ENCODE measurements at regions of chr12 and their contacts with region 1.

Region 1: GRCh38 chr12:77847060-77847541 is 16.4 kb downstream of the NAV3 start:
- DNase-seq: peak; percentile 39
- ATAC-seq: no peak; the same call in 1 of the 2 replicates
- H3K4me3 ChIP-seq: no peak overlapping the region
- H3K27ac ChIP-seq: no peak overlapping the region; the same call in 1 of the 2 replicates
- H3K4me1 ChIP-seq: peaks cover 32% of the 10 kb centered on the region
- H3K27me3 ChIP-seq: peaks cover 8% of the 10 kb centered on the region; the same call in 1 of the 2 replicates
- CTCF ChIP-seq: no peak

Region 2: GRCh38 chr12:77724367-77724957 is 122.6 kb before region 1 on chr12:
- CTCF ChIA-PET with region 1: no interaction called
- POLR2A ChIA-PET with region 1: no interaction called
- intact Hi-C with region 1: loop called (anchors 10 kb)
- DNase-seq: peak; percentile 60
- ATAC-seq: peak; percentile 62; the same call in 1 of the 2 replicates
- H3K4me3 ChIP-seq: no peak overlapping the region
- H3K27ac ChIP-seq: no peak overlapping the region
- H3K4me1 ChIP-seq: no peaks in the 10 kb centered on the region
- H3K27me3 ChIP-seq: no peaks in the 10 kb centered on the region
- CTCF ChIP-seq: peak; percentile 84

Region 3: GRCh38 chr12:77796775-77797174 is 50.3 kb before region 1 on chr12:
- CTCF ChIA-PET with region 1: no interaction called
- POLR2A ChIA-PET with region 1: no interaction called
- intact Hi-C with region 1: loop called (anchors 1 kb)
- DNase-seq: peak; percentile 70
- ATAC-seq: peak; percentile 90
- H3K4me3 ChIP-seq: no peak overlapping the region
- H3K27ac ChIP-seq: no peak overlapping the region
- H3K4me1 ChIP-seq: peaks cover 8% of the 10 kb centered on the region
- H3K27me3 ChIP-seq: no peaks in the 10 kb centered on the region
- CTCF ChIP-seq: no peak

Region 4: GRCh38 chr12:77861317-77861716 is 14.2 kb after region 1 on chr12:
- CTCF ChIA-PET with region 1: no interaction called
- POLR2A ChIA-PET with region 1: no interaction called
- intact Hi-C with region 1: no loop called
- DNase-seq: no peak
- ATAC-seq: no peak
- H3K4me3 ChIP-seq: no peak overlapping the region
- H3K27ac ChIP-seq: no peak overlapping the region
- H3K4me1 ChIP-seq: no peaks in the 10 kb centered on the region
- H3K27me3 ChIP-seq: peaks cover 15% of the 10 kb centered on the region
- CTCF ChIP-seq: no peak

Region 5: DNA sequence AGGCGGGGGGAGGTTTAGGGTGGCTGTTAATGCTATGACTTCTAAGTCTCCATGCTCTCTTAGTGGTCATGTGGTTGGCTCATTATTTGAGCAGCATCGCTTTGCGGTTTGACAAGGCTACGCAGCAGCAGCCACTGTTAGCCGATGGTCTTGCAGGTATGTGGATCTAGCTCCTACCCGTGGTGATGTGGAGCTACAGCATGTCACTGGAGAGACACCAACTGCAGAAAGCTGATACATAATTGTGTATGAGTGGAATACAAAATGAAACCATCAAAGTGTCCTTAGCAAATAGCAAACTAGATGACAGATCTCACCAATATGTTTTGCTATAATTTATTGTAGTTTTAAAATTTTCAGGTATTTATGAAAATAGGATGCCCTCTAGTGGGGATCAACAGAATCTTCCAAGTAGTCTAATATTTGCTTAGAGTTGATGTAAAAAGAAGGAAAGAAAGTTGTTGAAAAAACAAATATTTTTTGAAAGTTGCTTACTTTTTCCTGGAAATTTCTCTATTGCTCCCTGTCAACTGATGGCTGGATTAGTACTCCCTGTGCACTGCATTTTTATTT is 78.5 kb after region 1 on chr12:
- CTCF ChIA-PET with region 1: no interaction called
- POLR2A ChIA-PET with region 1: interaction called, 8 read pairs
- intact Hi-C with region 1: loop called (anchors 1 kb)
- DNase-seq: peak; percentile 90
- ATAC-seq: peak; percentile 100
- H3K4me3 ChIP-seq: no peak overlapping the region
- H3K27ac ChIP-seq: no peak overlapping the region
- H3K4me1 ChIP-seq: no peaks in the 10 kb centered on the region
- H3K27me3 ChIP-seq: peaks cover 26% of the 10 kb centered on the region
- CTCF ChIP-seq: peak; percentile 100

Region 6: GRCh38 chr12:77995436-77996167 is 148.5 kb after region 1 on chr12:
- CTCF ChIA-PET with region 1: no interaction called
- POLR2A ChIA-PET with region 1: no interaction called
- intact Hi-C with region 1: loop called (anchors 5 kb)
- DNase-seq: peak; percentile 85
- ATAC-seq: peak; percentile 99
- H3K4me3 ChIP-seq: no peak overlapping the region
- H3K27ac ChIP-seq: no peak overlapping the region
- H3K4me1 ChIP-seq: peaks cover 11% of the 10 kb centered on the region
- H3K27me3 ChIP-seq: no peaks in the 10 kb centered on the region
- CTCF ChIP-seq: no peak